Activated B cell treated with CpG ODN at 0.5 μM for 24 hours (primary cell): ENCODE measurements at regions of chr10 and their contacts with region 1.

Region 1: GRCh38 chr10:132307823-132308587 is at the start of gene STK32C:
- DNase-seq: peak; percentile 79
- ATAC-seq: peak; percentile 90
- H3K4me3 Mint-ChIP-seq: peak within 1 kb of the TSS; percentile 86
- H3K27ac Mint-ChIP-seq: no peak within 1 kb of the TSS
- H3K4me1 Mint-ChIP-seq: peaks cover 11% of the 10 kb centered on the region
- H3K27me3 Mint-ChIP-seq: peaks cover 11% of the 10 kb centered on the region
- CTCF ChIP-seq: no peak
- total RNA-seq, gene STK32C: 11.0 and 13.8 TPM in 2 replicates

Region 2: DNA sequence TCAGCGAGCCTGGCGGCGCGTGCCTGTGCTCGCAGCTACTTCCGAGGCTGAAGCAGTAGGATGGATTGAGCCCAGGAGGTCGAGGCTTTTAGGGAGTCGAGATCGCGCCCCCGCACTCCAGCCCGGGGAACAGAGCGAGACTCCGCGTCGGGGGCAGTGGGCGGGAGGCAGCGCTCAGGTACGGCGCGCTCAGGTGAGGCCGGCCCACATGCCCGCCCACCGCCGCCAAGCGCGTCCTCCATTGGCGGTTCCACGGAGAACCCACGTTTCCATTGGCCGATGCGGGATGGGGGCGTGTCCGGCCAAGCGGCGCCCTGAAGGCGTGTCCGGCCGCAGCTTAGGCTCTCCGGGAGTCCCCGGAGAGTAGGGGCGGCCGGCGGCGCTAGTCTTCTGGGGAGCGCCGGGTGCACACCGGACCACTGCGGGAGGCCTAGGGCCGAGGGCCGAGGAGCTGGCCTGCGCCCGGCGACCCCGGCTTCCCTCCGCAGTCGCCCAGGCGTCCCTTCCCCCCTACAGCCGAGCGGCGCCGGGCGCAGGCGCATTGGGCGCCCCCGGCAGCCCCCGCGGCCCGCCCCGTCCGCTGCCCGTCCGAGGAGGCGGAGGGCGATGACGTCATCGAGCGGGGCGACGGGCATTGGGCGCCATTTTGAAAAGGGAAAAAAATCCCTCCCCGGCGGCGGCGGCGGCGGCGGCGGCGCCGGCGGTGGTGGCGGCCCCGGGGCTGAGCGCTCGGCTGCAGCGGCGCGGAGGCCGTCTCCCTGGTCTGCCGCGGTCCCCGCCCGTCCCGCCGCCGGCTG is 407.5 kb before region 1 on chr10 and contains the start of gene PPP2R2D:
- CTCF ChIA-PET with region 1: no interaction called
- POLR2A ChIA-PET with region 1: no interaction called
- intact Hi-C with region 1: loop called (anchors 2 kb)
- DNase-seq: peak; percentile 96
- ATAC-seq: peak; percentile 91
- H3K4me3 Mint-ChIP-seq: peak within 1 kb of the TSS; percentile 89
- H3K27ac Mint-ChIP-seq: peak within 1 kb of the TSS; percentile 82
- H3K4me1 Mint-ChIP-seq: peaks cover 39% of the 10 kb centered on the region
- H3K27me3 Mint-ChIP-seq: peaks cover 6% of the 10 kb centered on the region
- CTCF ChIP-seq: no peak
- total RNA-seq, gene PPP2R2D: 28.0 and 32.7 TPM in 2 replicates

Region 3: DNA sequence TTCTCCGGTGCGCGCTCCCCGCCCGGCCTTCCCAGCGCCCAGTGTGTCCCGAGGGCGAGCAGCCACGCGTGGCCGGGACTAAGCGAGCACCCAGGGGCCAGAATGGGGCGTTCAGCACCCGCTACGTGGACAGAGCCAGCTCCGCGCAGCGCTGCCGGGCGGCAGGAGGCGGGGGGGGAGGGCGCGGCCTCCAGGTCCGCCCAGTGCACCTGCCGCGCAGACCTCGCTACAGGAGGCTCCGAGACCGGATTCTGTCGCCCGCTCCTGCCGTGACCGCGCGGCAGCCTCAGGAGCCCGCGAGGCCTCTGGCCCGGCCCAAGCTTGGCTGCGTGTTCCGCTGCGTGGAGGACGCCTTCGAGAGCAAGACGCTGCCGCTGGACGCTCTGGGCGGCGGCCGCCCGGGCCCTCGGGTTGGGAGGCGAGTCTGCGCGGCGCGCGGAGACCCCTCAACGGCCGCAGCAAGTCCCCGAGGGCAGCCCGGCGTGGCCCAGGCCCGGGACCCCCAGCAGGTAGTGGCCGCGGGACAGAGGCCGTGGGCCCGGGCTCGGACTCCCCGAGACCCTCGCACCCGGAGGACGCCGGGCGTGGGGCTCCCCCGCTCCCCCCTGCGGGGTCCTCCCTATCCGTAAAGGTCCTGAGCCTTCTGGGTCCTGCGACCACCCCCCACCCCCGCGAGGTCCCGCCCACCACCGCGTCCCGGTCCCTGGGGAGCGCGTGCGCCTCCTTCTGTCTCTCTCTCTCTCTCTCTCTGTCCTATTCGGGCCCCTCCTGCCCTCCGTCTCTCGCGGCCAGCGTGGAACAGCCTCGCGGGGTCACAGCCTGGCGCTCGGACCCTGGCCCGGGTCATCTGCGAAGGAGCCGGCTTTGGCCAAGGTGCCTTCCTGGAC is 122.2 kb before region 1 on chr10:
- CTCF ChIA-PET with region 1: no interaction called
- POLR2A ChIA-PET with region 1: no interaction called
- intact Hi-C with region 1: loop called (anchors 2 kb)
- DNase-seq: no peak
- ATAC-seq: peak; percentile 74
- H3K4me3 Mint-ChIP-seq: peak overlapping the region; percentile 57
- H3K27ac Mint-ChIP-seq: no peak overlapping the region
- H3K4me1 Mint-ChIP-seq: peaks cover 12% of the 10 kb centered on the region
- H3K27me3 Mint-ChIP-seq: peaks cover 44% of the 10 kb centered on the region
- CTCF ChIP-seq: no peak

Region 4: GRCh38 chr10:132353456-132354355 is 45.7 kb after region 1 on chr10:
- CTCF ChIA-PET with region 1: no interaction called
- POLR2A ChIA-PET with region 1: no interaction called
- intact Hi-C with region 1: loop called (anchors 1 kb)
- DNase-seq: no peak
- ATAC-seq: no peak
- H3K4me3 Mint-ChIP-seq: no peak overlapping the region
- H3K27ac Mint-ChIP-seq: no peak overlapping the region
- H3K4me1 Mint-ChIP-seq: peaks cover 7% of the 10 kb centered on the region
- H3K27me3 Mint-ChIP-seq: no peaks in the 10 kb centered on the region
- CTCF ChIP-seq: no peak

Region 5: DNA sequence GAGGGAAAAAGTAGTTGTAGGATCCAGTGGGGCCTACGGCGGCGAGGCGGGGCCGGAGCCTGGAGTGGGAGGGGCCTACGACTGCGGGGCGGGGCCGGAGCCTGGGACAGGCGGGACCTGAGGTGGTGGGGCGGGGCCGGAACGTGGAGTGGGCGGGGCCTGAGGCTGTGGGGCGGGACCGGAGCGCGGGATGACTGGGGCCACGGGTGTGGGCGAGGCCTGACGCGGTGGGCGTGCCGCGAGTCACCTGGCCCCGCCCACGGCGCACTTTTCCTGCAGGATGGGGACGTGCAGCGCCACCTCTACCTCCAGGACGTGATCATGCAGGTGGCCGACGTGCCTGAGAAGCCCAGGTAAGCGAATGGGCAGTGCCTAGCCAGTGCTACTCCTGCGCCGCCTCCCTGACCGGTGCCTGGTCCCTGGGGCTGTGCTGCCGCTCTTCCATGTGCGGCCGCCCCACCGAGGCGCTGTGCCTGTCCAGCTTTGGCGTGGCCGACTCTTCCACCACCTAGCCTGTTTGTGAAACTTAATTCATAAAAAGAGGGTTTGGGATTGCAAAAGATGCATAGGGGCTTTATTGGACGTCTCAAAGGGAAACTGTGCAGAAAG is 1001.2 kb after region 1 on chr10:
- CTCF ChIA-PET with region 1: no interaction called
- POLR2A ChIA-PET with region 1: no interaction called
- intact Hi-C with region 1: loop called (anchors 5 kb)
- DNase-seq: peak; percentile 94
- ATAC-seq: peak; percentile 89
- H3K4me3 Mint-ChIP-seq: peak overlapping the region; percentile 78
- H3K27ac Mint-ChIP-seq: peak overlapping the region; percentile 73
- H3K4me1 Mint-ChIP-seq: peaks cover 36% of the 10 kb centered on the region
- H3K27me3 Mint-ChIP-seq: no peaks in the 10 kb centered on the region
- CTCF ChIP-seq: no peak